Esophagus muscularis mucosa (tissue), 4 donors: ENCODE measurements at regions of chr5 and their contacts with region 1.

Region 1: DNA sequence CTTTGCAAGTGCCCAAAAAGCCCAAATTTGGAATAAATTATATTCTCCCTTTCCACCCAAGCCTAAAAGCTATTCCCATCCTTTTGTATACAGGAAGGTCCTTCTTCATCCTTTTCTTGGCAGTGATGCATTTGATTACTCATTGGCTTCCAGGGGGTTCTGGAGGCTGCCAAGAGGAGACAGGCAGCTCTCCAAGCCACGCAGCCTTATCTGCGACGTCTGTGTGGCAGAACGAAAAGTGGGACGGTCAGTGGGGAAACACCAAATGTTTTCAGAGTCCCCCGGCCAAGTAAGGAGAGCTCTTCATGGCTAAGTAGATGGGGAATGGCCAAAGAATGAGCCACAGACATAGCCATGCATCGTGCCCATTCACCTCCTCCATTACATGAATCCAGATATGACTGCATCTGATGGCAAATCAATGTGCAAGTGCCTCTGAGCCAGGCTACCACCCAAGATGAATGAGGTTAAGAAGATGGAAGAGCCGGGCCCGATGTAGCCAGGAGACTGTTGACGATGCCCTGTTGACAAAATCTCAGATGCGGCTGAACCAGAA is 12.1 kb downstream of the ADAM19 start:
- DNase-seq: no peak
- H3K4me3 ChIP-seq: no peak overlapping the region
- H3K27ac ChIP-seq: peak overlapping the region; percentile 85 to 90 (median 88)
- H3K4me1 ChIP-seq: peaks cover 59 to 97% (median 90%) of the 10 kb centered on the region in 4 donors
- H3K27me3 ChIP-seq: no peaks in the 10 kb centered on the region
- CTCF ChIP-seq: no peak
- EP300 ChIP-seq: peak; percentile 38
- POLR2A ChIP-seq: no peak

Region 2: GRCh38 chr5:157516626-157517325 is 46.7 kb before region 1 on chr5:
- intact Hi-C with region 1: loop called (anchors 5 kb)
- DNase-seq: no peak
- H3K4me3 ChIP-seq: no peak overlapping the region
- H3K27ac ChIP-seq: peak overlapping the region; percentile 86 to 90 (median 88)
- H3K4me1 ChIP-seq: peaks cover 39 to 95% (median 78%) of the 10 kb centered on the region in 4 donors
- H3K27me3 ChIP-seq: no peaks in the 10 kb centered on the region
- CTCF ChIP-seq: no peak
- EP300 ChIP-seq: peak; percentile 10
- POLR2A ChIP-seq: no peak